CD8-positive, alpha-beta T cell (primary cell): ENCODE measurements at regions of chr7 and their contacts with region 1.

Region 1: GRCh38 chr7:140175221-140176121 is 1.3 kb downstream of the KDM7A start:
- DNase-seq: peak; percentile 76 to 98 (median 90)
- ATAC-seq: peak; percentile 66
- H3K4me3 ChIP-seq: peak overlapping the region; percentile 54 to 69
- H3K4me3 Mint-ChIP-seq: peak overlapping the region; percentile 87
- H3K27ac ChIP-seq: peak overlapping the region; percentile 80 to 93
- H3K27ac Mint-ChIP-seq: peak overlapping the region; percentile 96
- H3K4me1 ChIP-seq: peaks cover 33% of the 10 kb centered on the region
- H3K4me1 Mint-ChIP-seq: peaks cover 42% of the 10 kb centered on the region
- H3K27me3 ChIP-seq: no peaks in the 10 kb centered on the region
- H3K27me3 Mint-ChIP-seq: no peaks in the 10 kb centered on the region
- CTCF ChIP-seq: peak; percentile 82

Region 2: DNA sequence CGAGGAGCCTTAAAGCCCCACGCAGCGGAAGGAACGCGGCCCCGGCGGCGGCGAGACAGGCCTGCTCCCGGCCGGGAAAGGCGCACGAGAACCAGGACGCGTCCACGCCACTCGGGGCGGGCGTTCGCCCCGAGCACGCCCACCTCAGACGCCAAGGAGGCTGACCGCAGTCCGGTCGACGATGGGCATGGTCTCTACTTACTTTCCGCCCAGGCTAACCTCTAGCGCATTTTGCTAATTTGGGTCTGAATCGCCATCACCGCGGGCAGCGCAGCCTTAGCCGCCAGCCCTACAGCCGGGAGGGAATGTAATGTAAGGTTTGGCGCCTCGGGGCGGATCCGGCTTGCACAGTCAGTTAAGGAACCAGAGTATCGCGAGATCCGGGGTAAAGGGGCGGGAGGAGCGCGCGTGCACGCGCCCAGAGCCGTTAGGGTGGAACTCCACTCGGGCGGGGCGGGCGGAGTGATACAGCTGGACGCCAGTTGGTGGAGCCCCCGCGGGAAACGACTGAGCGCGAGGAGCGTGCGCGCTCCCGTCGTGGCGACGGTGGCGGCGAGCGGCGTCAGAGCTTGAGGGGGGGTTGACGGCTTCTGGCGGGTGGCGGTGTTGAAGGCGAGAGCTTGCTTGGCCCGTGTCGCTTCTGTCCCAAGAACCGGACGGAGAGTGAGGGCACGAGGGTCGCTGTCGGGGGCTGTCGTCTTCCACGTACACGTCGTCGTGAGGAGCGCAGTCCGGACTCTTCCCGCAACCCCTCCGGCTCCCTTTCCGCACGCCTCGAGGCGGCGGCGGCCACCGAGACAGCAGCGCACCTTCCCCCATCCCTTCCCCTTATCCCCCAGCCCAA is 815.9 kb before region 1 on chr7 and contains the start of gene LUC7L2:
- CTCF ChIA-PET with region 1: no interaction called
- POLR2A ChIA-PET with region 1: no interaction called
- intact Hi-C with region 1: loop called in 1 of 2 experiments (anchors 5 kb)
- DNase-seq: peak; percentile 99 to 100 (median 99)
- ATAC-seq: peak; percentile 74
- H3K4me3 ChIP-seq: peak within 1 kb of the TSS; percentile 86 to 97
- H3K4me3 Mint-ChIP-seq: peak within 1 kb of the TSS; percentile 99
- H3K27ac ChIP-seq: peak within 1 kb of the TSS; percentile 93 to 99
- H3K27ac Mint-ChIP-seq: peak within 1 kb of the TSS; percentile 100
- H3K4me1 ChIP-seq: peaks cover 35% of the 10 kb centered on the region
- H3K4me1 Mint-ChIP-seq: peaks cover 41% of the 10 kb centered on the region
- H3K27me3 ChIP-seq: no peaks in the 10 kb centered on the region
- H3K27me3 Mint-ChIP-seq: no peaks in the 10 kb centered on the region
- CTCF ChIP-seq: no peak
- total RNA-seq, gene LUC7L2: 171 to 192 TPM

Region 3: DNA sequence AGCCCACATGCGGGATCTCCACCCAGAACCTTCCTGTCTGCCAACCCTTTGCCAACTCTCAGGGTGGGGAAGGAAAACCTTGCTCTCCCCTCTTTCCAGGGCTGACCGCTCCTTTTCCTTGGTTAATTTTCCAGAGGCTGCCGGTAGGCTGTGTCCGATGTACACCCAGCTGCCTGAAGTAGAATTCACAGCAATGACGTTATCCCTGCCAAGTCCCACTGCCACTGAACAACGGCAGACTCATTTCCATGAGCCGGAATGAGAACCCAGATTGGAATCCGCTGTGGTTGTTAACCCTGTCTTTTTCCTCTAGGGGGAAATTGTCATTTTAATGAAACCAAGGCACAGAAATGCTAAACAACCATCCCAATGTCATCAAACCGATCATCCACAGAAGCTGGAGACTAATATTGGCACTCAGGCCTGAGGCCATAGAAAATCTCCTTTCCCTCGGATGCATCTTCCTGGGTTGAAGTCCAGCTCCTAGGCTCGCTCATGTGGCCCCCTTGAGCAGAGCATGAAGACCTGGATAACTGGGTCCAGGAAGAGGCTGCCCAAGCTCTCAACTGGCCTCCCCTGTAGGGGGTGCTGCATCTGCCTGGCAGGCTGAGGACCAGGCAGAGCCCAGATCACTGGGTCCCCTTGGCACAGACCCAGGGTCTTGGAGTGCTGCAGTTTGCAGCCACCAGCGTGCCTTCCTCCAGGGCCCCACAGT is 722.4 kb before region 1 on chr7:
- CTCF ChIA-PET with region 1: no interaction called
- POLR2A ChIA-PET with region 1: no interaction called
- intact Hi-C with region 1: no loop called
- DNase-seq: no peak
- ATAC-seq: no peak
- H3K4me3 ChIP-seq: no peak overlapping the region
- H3K4me3 Mint-ChIP-seq: no peak overlapping the region
- H3K27ac ChIP-seq: no peak overlapping the region
- H3K27ac Mint-ChIP-seq: no peak overlapping the region
- H3K4me1 ChIP-seq: no peaks in the 10 kb centered on the region
- H3K4me1 Mint-ChIP-seq: no peaks in the 10 kb centered on the region
- H3K27me3 ChIP-seq: no peaks in the 10 kb centered on the region
- H3K27me3 Mint-ChIP-seq: no peaks in the 10 kb centered on the region
- CTCF ChIP-seq: no peak

Region 4: GRCh38 chr7:140230861-140231770 is 55.6 kb after region 1 on chr7:
- CTCF ChIA-PET with region 1: interaction called, 5 read pairs
- POLR2A ChIA-PET with region 1: interaction called, 127 read pairs
- intact Hi-C with region 1: loop called (anchors 1 kb)
- DNase-seq: peak in 8 of 9 experiments; percentile 25 to 80 (median 62)
- ATAC-seq: peak; percentile 19
- H3K4me3 ChIP-seq: peak overlapping the region; percentile 73
- H3K4me3 Mint-ChIP-seq: peak overlapping the region; percentile 92
- H3K27ac ChIP-seq: peak overlapping the region; percentile 83 to 85
- H3K27ac Mint-ChIP-seq: peak overlapping the region; percentile 100
- H3K4me1 ChIP-seq: peaks cover 25% of the 10 kb centered on the region
- H3K4me1 Mint-ChIP-seq: peaks cover 40% of the 10 kb centered on the region
- H3K27me3 ChIP-seq: no peaks in the 10 kb centered on the region
- H3K27me3 Mint-ChIP-seq: no peaks in the 10 kb centered on the region
- CTCF ChIP-seq: no peak

Region 5: GRCh38 chr7:140304191-140304799 is 128.8 kb after region 1 on chr7:
- CTCF ChIA-PET with region 1: interaction called, 6 read pairs
- POLR2A ChIA-PET with region 1: interaction called, 22 read pairs
- intact Hi-C with region 1: loop called (anchors 1 kb)
- DNase-seq: peak in 8 of 9 experiments; percentile 11 to 80 (median 46)
- ATAC-seq: peak; percentile 96
- H3K4me3 ChIP-seq: no peak overlapping the region
- H3K4me3 Mint-ChIP-seq: no peak overlapping the region
- H3K27ac ChIP-seq: peak overlapping the region in 1 of 2 experiments; percentile 17
- H3K27ac Mint-ChIP-seq: peak overlapping the region; percentile 87
- H3K4me1 ChIP-seq: peaks cover 5% of the 10 kb centered on the region
- H3K4me1 Mint-ChIP-seq: peaks cover 5% of the 10 kb centered on the region
- H3K27me3 ChIP-seq: no peaks in the 10 kb centered on the region
- H3K27me3 Mint-ChIP-seq: no peaks in the 10 kb centered on the region
- CTCF ChIP-seq: peak; percentile 60

Region 6: GRCh38 chr7:140673063-140673773 is 497.7 kb after region 1 on chr7:
- CTCF ChIA-PET with region 1: no interaction called
- POLR2A ChIA-PET with region 1: no interaction called
- intact Hi-C with region 1: loop called in 1 of 2 experiments (anchors 5 kb)
- DNase-seq: peak; percentile 30 to 79 (median 65)
- ATAC-seq: peak; percentile 77
- H3K4me3 ChIP-seq: peak overlapping the region; percentile 56 to 64
- H3K4me3 Mint-ChIP-seq: peak overlapping the region; percentile 88
- H3K27ac ChIP-seq: peak overlapping the region; percentile 68 to 80
- H3K27ac Mint-ChIP-seq: peak overlapping the region; percentile 93
- H3K4me1 ChIP-seq: peaks cover 22% of the 10 kb centered on the region
- H3K4me1 Mint-ChIP-seq: peaks cover 41% of the 10 kb centered on the region
- H3K27me3 ChIP-seq: no peaks in the 10 kb centered on the region
- H3K27me3 Mint-ChIP-seq: no peaks in the 10 kb centered on the region
- CTCF ChIP-seq: no peak